Activated CD8-positive, alpha-beta T cell treated with anti-CD3 and anti-CD28 coated beads for 36 hours (primary cell): ENCODE measurements at regions of chr7 and their contacts with region 1.

Region 1: GRCh38 chr7:131513245-131514061 is 43.0 kb downstream of the PODXL start:
- DNase-seq: peak; percentile 86
- ATAC-seq: peak; percentile 99
- H3K4me3 Mint-ChIP-seq: no peak overlapping the region
- H3K27ac Mint-ChIP-seq: no peak overlapping the region
- H3K4me1 Mint-ChIP-seq: peaks cover 6% of the 10 kb centered on the region
- H3K27me3 Mint-ChIP-seq: peaks cover 6% of the 10 kb centered on the region
- CTCF ChIP-seq: peak; percentile 87

Region 2: GRCh38 chr7:131493581-131493980 is 19.9 kb before region 1 on chr7:
- CTCF ChIA-PET with region 1: interaction called, 25 read pairs
- POLR2A ChIA-PET with region 1: no interaction called
- intact Hi-C with region 1: no loop called
- DNase-seq: no peak
- ATAC-seq: no peak
- H3K4me3 Mint-ChIP-seq: no peak overlapping the region
- H3K27ac Mint-ChIP-seq: no peak overlapping the region
- H3K4me1 Mint-ChIP-seq: no peaks in the 10 kb centered on the region
- H3K27me3 Mint-ChIP-seq: no peaks in the 10 kb centered on the region
- CTCF ChIP-seq: no peak

Region 3: GRCh38 chr7:131501422-131501821 is 12.0 kb before region 1 on chr7:
- CTCF ChIA-PET with region 1: interaction called, 29 read pairs
- POLR2A ChIA-PET with region 1: interaction called, 7 read pairs
- intact Hi-C with region 1: no loop called
- DNase-seq: peak; percentile 82
- ATAC-seq: peak; percentile 93
- H3K4me3 Mint-ChIP-seq: no peak overlapping the region
- H3K27ac Mint-ChIP-seq: peak overlapping the region; percentile 18
- H3K4me1 Mint-ChIP-seq: peaks cover 34% of the 10 kb centered on the region
- H3K27me3 Mint-ChIP-seq: no peaks in the 10 kb centered on the region
- CTCF ChIP-seq: no peak

Region 4: DNA sequence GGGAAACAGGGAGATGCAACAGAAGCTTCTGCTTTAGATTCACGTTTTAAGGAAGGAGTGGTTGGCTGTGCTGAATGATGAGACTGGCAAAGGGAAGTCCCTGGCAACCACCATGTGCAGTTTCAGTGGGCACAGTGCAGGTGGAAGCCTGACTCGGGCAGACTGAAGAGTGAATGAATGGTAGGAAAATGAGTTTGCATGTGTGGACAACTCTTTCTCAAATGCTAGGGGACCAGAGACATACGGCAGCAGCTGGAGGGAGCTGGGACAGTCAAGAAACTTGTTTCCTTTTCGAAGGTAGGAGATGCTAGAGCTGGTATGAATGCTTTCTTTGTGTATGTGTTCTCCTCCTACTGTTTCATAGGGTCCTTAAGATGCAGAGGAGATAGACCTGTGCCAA is 14.0 kb after region 1 on chr7:
- CTCF ChIA-PET with region 1: interaction called, 10 read pairs
- POLR2A ChIA-PET with region 1: no interaction called
- intact Hi-C with region 1: no loop called
- DNase-seq: no peak
- ATAC-seq: no peak
- H3K4me3 Mint-ChIP-seq: no peak overlapping the region
- H3K27ac Mint-ChIP-seq: no peak overlapping the region
- H3K4me1 Mint-ChIP-seq: peaks cover 9% of the 10 kb centered on the region
- H3K27me3 Mint-ChIP-seq: peaks cover 3% of the 10 kb centered on the region
- CTCF ChIP-seq: no peak